ENCODE measurements at regions of chr2 and their contacts with region 1.

Region 1: DNA sequence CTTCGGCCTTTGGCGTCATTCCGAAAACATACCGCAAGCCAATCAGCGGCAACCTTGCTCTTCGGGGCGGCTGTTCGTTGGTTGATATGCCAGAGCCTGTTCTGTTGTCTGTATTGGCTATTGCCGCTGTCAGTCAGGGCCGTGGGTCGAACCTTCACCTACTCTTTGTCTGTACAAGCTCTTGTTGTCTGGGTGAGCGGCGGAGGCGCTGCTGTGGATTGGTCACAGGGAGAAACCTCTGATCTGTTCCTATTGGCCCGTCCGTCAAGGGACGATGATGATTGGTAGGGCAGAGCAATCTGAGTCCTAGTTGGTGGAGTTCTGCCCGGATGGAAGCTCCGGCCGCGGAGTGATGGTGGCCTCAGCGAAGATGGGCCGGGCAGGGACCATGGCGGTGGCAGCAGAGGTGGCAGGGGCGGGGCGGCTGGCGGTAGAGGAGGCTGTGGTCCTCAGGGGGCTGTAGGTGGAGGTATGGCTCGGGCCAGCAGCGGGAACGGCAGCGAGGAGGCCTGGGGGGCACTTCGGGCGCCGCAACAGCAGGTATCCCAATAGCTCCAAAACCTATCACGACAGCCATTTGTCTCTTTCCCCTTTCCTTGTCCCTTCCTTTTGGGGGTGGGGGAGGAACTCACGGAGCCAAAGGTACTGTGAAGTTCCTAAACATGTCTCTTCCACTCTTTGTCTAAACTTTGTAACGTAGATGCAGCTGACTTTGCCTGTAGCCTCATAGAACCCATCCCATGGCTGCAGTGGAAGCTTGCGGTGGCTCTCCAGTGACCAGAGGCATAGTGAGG is at the start of gene WBP1:
- DNase-seq: peak; percentile 100
- H3K4me3 Mint-ChIP-seq: peak within 1 kb of the TSS; percentile 98
- H3K27ac Mint-ChIP-seq: peak within 1 kb of the TSS; percentile 91
- H3K4me1 Mint-ChIP-seq: peaks cover 50% of the 10 kb centered on the region
- H3K27me3 Mint-ChIP-seq: no peaks in the 10 kb centered on the region
- CTCF ChIP-seq: no peak
- total RNA-seq, gene WBP1: 45.7 and 46.5 TPM in 2 replicates

Region 2: DNA sequence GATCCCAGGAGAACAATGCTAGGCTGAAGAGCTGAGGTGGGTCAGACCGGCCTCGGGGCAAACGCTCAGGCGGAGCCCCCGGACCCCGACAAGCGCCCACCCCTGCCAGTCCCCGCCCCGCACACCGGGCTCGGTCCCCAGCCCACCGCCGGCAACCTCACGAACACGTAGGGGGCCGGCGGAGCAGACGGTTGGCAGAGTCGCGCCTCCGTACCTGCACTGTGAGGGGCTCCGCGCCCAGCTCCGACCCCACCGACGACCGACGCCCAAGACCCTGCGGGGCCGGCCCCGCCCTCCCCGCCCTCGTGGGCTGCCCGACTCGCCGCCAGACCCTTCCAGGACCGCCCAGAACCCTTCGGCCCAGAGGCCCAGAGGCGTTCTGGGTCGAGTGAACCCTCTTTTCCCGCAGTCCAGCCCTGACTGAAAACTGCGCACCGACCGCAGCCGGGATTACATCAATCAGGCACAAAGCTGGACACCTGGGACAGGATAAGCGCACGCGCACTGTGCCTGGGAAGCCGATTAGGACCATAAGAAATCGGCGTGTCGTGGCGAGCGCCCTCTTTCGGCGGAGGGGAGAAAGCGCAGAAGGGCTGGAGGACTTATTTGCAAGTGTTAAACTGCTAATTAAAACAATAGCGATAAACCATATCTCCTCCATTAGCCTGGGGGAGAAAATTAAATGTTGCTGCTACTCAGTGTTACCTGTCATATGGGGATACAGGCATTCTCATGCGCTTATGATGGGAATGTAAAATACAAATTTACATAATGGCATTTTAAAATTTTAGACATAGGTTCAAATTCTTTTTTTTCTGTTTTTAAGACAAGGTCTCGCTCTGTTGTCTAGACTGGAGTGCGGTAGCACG is 66.5 kb before region 1 on chr2:
- CTCF ChIA-PET with region 1: interaction called, 3 read pairs
- POLR2A ChIA-PET with region 1: interaction called, 12 read pairs
- intact Hi-C with region 1: no loop called
- DNase-seq: peak; percentile 94
- H3K4me3 Mint-ChIP-seq: peak overlapping the region; percentile 79
- H3K27ac Mint-ChIP-seq: peak overlapping the region; percentile 91
- H3K4me1 Mint-ChIP-seq: no peaks in the 10 kb centered on the region
- H3K27me3 Mint-ChIP-seq: no peaks in the 10 kb centered on the region
- CTCF ChIP-seq: peak; percentile 91

Region 3: DNA sequence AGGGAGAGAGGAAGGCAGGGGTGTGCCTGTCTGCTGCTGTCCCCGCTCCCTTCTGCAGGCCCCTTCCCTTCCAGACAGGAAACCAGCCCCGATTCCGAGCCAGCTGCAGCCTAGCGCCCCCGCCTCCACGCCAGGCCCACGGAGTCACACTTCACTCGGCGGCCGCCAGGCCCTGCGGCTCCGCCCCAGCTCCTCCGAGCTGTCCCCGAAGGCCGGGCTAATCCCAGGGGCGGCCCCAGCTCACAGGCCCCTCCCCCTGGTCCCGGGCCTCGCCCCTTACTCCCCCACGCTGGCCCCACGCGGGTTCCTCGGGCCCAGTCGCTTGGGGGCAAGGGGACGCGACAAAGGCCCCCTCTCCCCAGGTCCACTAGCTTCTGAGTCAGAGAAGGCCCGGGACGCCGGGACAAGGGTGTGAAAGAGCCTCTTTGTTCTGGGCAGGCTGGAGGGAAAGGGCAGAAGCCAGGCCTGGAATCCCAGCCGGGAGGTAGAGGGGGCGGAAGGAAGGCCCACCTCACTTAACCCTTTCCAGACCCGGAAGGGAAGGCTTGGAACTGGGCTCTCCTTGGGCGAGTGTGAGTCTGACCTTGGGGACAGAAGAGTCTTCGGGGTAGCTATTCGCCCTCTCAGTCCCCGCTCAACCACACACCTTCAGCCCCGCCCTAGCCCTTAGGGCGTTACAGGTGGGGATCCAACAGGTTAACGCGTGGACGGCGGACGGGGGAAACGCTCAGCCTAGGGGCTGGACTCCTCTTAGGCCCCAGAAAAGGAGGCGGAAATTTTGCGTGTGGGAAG is 17.8 kb before region 1 on chr2:
- CTCF ChIA-PET with region 1: interaction called, 3 read pairs
- POLR2A ChIA-PET with region 1: interaction called, 132 read pairs
- intact Hi-C with region 1: loop called (anchors 2 kb)
- DNase-seq: peak; percentile 82
- H3K4me3 Mint-ChIP-seq: peak overlapping the region; percentile 78
- H3K27ac Mint-ChIP-seq: peak overlapping the region; percentile 80
- H3K4me1 Mint-ChIP-seq: peaks cover 15% of the 10 kb centered on the region
- H3K27me3 Mint-ChIP-seq: no peaks in the 10 kb centered on the region
- CTCF ChIP-seq: no peak

Region 4: GRCh38 chr2:74482801-74483674 is 24.7 kb after region 1 on chr2 and contains the starts of genes CCDC142 and TTC31:
- CTCF ChIA-PET with region 1: interaction called, 35 read pairs
- POLR2A ChIA-PET with region 1: interaction called, 102 read pairs
- intact Hi-C with region 1: no loop called
- DNase-seq: peak; percentile 97
- H3K4me3 Mint-ChIP-seq: peak within 1 kb of the TSS; percentile 85
- H3K27ac Mint-ChIP-seq: peak within 1 kb of the TSS; percentile 89
- H3K4me1 Mint-ChIP-seq: peaks cover 20% of the 10 kb centered on the region
- H3K27me3 Mint-ChIP-seq: no peaks in the 10 kb centered on the region
- CTCF ChIP-seq: peak; percentile 81
- total RNA-seq, gene CCDC142: 10.1 and 16.4 TPM in 2 replicates
- total RNA-seq, gene TTC31: 17.6 and 18.1 TPM in 2 replicates

Region 5: DNA sequence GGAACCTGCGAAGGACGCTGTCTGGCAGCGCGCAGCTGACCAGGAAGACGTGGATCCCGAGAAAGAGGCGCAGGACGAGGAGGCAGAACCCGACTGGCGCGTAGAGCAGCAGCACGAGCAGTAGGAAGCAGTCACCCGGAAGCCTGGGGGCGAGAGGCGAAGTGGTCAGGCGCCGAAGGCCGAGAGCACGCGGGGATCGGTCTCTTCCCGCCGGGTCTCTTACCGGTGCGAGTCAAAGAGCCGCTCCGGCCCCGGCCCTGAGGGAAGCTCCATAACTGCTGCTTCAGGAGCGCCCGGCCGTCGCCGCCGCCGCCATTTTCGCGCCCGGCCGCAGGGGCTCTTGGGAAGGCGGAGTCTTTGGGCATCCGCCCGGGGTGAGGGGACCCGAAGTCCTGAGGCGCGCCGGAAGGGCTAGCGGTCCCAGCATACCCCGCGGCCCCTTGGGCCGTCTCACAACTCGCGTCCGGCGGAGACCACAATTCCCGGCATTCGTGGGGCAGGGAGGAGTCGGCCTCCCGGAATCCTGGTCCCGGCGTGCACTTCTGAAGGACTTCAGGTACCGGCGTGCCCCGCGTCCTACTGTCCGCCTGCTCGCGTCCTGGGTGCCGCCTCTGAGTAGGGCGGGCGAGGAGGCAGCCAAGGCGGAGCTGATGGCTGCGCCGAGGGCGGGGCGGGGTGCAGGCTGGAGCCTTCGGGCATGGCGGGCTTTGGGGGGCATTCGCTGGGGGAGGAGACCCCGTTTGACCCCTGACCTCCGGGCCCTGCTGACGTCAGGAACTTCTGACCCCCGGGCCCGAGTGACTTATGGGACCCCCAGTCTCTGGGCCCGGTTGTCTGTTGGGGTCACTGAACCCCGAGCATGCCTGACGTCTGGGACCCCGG is 71.3 kb after region 1 on chr2 and contains the starts of genes AUP1 and HTRA2:
- CTCF ChIA-PET with region 1: interaction called, 4 read pairs
- POLR2A ChIA-PET with region 1: interaction called, 27 read pairs
- intact Hi-C with region 1: no loop called
- DNase-seq: peak; percentile 99
- H3K4me3 Mint-ChIP-seq: peak within 1 kb of the TSS; percentile 94
- H3K27ac Mint-ChIP-seq: peak within 1 kb of the TSS; percentile 91
- H3K4me1 Mint-ChIP-seq: peaks cover 38% of the 10 kb centered on the region
- H3K27me3 Mint-ChIP-seq: no peaks in the 10 kb centered on the region
- CTCF ChIP-seq: no peak
- total RNA-seq, gene AUP1: 138 and 140 TPM in 2 replicates
- total RNA-seq, gene HTRA2: 27.6 and 33.0 TPM in 2 replicates

Region 6: DNA sequence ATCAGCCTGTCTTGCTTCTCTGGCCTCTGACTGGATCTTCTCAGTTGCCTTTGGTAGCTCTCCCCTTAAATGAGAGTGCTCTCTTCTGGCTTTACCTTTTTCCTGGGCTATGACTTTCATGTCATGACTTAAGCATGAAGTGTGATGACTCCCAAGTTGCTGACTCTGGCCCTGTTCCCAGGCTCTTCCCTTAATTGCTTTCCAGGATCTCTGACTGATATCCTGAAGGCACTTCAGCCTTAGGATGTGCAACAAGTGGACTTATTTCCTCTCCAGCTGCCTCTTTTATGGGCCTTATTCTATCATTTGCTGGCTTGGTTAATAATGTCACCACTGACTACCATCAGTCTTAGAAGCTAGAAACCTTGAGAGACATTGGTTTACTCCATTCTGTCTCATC is 213.2 kb after region 1 on chr2:
- CTCF ChIA-PET with region 1: no interaction called
- POLR2A ChIA-PET with region 1: no interaction called
- intact Hi-C with region 1: no loop called
- DNase-seq: peak; percentile 55
- H3K4me3 Mint-ChIP-seq: no peak overlapping the region
- H3K27ac Mint-ChIP-seq: no peak overlapping the region
- H3K4me1 Mint-ChIP-seq: peaks cover 8% of the 10 kb centered on the region
- H3K27me3 Mint-ChIP-seq: no peaks in the 10 kb centered on the region
- CTCF ChIP-seq: no peak

Measured in MCF 10A (cell line).